ENCODE measurements at regions of chr6 and their contacts with region 1.

Region 1: DNA sequence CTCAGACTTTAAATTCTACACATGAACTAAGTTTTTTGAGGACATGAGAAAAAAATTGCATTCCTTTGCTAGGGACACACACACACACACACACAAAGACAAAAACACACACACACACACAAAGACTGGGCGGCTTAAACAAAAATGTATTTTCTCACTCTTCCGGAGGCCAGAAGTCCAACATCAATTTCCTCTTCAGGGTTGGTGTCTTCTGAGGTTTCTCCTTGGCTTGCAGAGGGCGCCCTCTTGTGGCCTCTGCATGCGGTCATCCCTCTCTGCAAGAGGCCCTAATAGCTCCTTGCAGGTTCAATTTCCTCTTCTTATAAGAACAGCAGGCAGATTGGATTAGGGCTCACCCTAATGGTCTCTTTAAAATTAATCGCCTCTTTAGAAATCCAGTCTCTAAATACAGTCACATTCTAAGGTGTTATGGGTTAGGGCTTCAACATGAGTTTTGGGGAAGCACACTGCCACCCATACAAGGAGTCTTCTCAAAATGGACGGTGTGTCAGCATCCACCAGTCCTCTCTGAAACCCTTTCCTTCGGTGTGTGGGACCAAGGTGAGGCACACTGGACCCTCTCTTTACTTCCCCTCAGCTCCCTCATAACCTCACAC is 61.4 kb downstream of the GPR6 start:
- DNase-seq: peak; percentile 61
- H3K4me3 ChIP-seq: peak overlapping the region; percentile 45
- CTCF ChIP-seq: peak; percentile 89

Region 2: GRCh38 chr6:109595998-109596397 is 443.5 kb before region 1 on chr6:
- CTCF ChIA-PET with region 1: interaction called, 17 read pairs
- POLR2A ChIA-PET with region 1: no interaction called
- DNase-seq: peak; percentile 19
- H3K4me3 ChIP-seq: no peak overlapping the region
- CTCF ChIP-seq: peak; percentile 64

Region 3: DNA sequence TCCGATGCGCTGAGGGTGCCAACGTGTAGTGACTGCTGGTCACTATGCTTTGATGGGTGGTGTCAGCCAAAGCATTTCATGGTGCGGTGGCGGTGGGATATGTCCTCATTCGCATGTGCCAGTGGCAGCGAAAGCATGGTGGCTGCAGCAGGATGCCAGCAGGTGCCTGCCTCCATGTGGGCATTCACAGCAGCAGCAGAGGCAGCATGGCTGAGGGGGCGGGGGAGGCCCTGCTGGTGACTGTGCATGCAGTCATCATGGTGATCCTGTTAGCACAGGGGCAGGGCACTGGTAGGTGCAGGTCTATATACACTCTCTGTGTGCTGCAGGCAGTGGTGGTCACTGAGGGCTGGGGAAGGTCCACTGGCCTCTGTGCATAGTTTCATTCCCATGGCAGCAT is 326.4 kb before region 1 on chr6:
- CTCF ChIA-PET with region 1: interaction called, 206 read pairs
- POLR2A ChIA-PET with region 1: no interaction called
- DNase-seq: no peak
- H3K4me3 ChIP-seq: no peak overlapping the region
- CTCF ChIP-seq: no peak

Region 4: GRCh38 chr6:109788687-109789086 is 250.8 kb before region 1 on chr6:
- CTCF ChIA-PET with region 1: interaction called, 12 read pairs
- POLR2A ChIA-PET with region 1: no interaction called
- DNase-seq: no peak
- H3K4me3 ChIP-seq: no peak overlapping the region
- CTCF ChIP-seq: no peak

Region 5: DNA sequence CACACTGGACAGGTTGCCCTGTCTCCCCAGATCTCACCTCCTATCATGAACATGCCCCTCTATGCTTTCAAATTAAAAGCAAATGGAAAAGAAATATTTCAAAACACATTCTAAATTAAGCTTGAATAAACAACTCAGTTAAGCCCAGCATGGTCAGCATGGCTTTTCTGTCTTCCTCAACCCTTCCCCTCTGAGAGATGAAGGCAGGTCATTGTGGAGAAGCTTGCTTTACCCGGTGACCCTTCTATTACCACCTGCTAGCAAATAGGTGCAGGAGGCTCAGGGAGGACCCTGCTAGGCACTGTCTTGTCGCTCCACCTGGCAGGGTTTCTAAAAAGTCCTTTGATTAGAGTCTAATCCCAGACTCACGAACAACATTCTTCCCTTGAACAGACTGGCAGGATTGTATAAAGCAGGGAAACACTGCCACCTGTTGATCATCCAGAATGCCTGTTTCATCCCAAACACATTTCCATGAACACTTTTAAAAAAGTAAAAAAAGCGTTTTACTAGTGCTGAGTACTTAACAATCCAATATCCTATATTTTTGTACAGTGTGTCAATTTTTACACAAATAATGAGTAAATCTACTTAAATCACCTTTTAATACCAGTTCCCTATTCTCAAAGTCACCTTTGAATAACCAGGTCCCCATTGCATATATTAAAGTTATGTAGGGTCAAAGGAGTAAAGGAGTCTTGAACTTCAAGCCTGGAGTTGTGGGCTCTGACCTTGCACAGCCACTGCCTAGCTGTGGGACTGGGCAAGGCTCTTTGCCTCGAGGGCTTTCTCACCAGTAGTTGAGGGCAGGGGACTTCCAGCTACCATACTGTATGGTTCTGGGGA is 14.1 kb after region 1 on chr6:
- CTCF ChIA-PET with region 1: interaction called, 41 read pairs
- POLR2A ChIA-PET with region 1: no interaction called
- DNase-seq: peak; percentile 19
- H3K4me3 ChIP-seq: no peak overlapping the region
- CTCF ChIP-seq: peak; percentile 66

Measured in AG04449 (cell line).